ENCODE measurements at regions of chr5 and their contacts with region 1.

Region 1: DNA sequence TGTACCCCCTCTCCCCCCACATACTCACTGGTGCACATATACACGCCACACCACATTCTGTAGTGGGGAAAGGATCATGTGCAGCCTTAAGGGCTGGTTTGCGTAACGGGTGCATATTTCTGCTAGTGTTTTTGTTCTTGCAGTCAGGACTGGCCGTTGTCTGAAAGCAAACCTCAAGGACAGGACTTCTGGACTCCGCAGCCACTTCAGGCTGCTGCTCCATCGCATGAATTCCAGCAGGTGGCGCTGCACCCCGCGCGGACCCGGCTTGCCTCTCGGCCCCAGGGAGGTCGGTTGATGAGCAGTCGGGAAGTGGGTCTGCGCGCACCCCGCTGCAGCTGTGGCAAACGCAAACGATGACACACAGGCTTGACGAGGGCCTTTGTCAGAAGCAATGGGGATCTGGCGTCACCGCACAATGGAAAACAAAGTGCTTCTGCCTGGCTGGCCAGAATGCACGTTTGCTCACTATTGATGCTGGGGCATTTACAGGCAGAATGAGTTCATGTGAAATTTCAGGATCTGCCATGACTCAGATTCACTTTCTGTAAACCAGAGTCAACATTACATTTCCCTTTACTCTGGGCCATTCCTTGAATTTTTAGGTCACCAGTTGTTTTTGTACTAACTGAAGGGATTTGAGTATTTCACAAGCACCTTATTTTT is 36.3 kb upstream of the GLRX start:
- DNase-seq: peak; percentile 96
- H3K4me3 Mint-ChIP-seq: peak overlapping the region; percentile 67
- H3K27ac Mint-ChIP-seq: peak overlapping the region; percentile 99
- H3K4me1 Mint-ChIP-seq: peaks cover 57% of the 10 kb centered on the region
- H3K27me3 Mint-ChIP-seq: no peaks in the 10 kb centered on the region
- CTCF ChIP-seq: peak; percentile 93

Region 2: DNA sequence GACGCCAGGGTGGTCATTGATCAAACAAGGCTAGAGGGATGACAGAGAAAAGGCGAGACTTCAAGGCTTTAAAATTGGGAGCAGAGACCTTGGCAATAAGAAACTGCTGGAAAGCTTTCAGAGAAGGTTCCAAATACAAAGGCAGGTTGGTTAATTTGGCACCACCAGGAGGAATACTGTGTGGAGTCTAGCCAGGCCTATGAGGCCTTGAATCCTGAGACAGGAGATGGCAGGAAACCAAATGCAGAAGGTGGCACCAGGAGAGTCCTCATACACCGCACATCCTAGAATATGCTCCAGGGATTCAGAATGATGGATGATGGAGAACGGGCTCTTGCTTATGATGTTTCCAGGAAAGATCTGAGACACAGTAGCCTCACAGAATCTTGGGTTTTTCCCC is 663.9 kb before region 1 on chr5:
- CTCF ChIA-PET with region 1: no interaction called
- POLR2A ChIA-PET with region 1: no interaction called
- intact Hi-C with region 1: no loop called
- DNase-seq: no peak
- H3K4me3 Mint-ChIP-seq: no peak overlapping the region
- H3K27ac Mint-ChIP-seq: no peak overlapping the region
- H3K4me1 Mint-ChIP-seq: no peaks in the 10 kb centered on the region
- H3K27me3 Mint-ChIP-seq: no peaks in the 10 kb centered on the region
- CTCF ChIP-seq: no peak

Region 3: DNA sequence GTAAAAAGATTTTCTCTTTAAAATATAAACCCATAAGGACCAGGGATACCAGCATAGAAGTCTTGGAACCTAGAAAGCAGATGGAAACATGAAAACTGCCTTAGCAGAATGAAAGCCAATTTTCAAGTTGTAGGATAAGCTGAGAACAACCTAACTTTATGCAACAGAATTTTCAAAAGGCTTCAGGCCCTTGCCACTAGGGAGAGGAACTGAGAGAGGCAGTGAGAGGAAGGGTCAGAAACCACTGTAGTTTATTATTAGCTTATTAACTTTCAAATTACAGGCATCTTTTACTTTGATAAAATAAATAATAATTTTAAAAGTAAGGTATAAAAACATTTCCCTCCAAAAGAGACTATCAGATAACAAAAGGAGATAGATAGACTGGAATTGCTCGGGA is 434.3 kb before region 1 on chr5:
- CTCF ChIA-PET with region 1: no interaction called
- POLR2A ChIA-PET with region 1: no interaction called
- intact Hi-C with region 1: no loop called
- DNase-seq: no peak
- H3K4me3 Mint-ChIP-seq: no peak overlapping the region
- H3K27ac Mint-ChIP-seq: no peak overlapping the region
- H3K4me1 Mint-ChIP-seq: no peaks in the 10 kb centered on the region
- H3K27me3 Mint-ChIP-seq: no peaks in the 10 kb centered on the region
- CTCF ChIP-seq: no peak

Region 4: GRCh38 chr5:95870105-95870672 is 11.4 kb after region 1 on chr5:
- CTCF ChIA-PET with region 1: interaction called, 6 read pairs
- POLR2A ChIA-PET with region 1: interaction called, 11 read pairs
- intact Hi-C with region 1: no loop called
- DNase-seq: no peak
- H3K4me3 Mint-ChIP-seq: no peak overlapping the region
- H3K27ac Mint-ChIP-seq: peak overlapping the region; percentile 69
- H3K4me1 Mint-ChIP-seq: peaks cover 12% of the 10 kb centered on the region
- H3K27me3 Mint-ChIP-seq: no peaks in the 10 kb centered on the region
- CTCF ChIP-seq: no peak

Region 5: DNA sequence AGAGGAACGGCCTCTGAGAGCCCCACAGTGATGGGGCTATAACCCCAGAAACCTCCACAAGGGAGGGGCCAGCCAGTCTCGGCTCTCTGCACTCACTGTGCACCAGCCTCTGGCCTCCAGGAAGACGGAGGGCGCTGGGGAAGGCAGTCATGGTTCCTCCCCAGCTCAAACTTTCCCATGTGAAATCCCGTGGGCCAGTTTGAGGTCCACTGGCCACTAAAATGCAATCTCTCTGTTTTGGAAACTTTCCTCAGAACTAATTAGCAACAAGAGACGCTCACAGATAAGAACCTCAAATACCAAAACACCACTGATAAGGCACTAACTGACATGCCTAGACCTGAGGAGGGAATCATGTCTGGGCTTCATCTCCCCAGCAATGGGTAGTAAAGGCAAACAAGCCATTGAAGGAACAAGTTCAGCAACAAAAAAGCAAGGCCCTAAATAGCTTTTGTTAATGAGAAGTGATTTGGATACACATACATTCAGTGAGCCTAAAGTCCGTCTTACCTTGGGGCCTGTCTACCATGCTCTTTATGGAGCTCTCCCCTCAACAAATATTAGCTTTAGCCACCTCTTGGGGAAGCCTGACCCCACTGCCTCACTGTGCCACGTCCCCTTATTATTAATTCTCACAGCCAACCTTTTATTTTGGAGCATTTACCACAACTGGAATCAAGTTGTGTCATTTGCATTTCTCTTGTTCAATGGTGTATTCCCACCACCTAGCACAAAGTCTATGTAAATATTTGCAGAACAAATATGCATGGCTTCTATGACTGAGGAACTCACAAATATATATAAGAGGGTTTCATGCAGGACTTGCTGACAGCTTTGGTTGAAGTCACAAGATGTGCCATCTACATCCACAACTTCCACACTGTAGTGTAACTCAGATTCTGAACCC is 19.9 kb after region 1 on chr5:
- CTCF ChIA-PET with region 1: interaction called, 3 read pairs
- POLR2A ChIA-PET with region 1: interaction called, 12 read pairs
- intact Hi-C with region 1: no loop called
- DNase-seq: no peak
- H3K4me3 Mint-ChIP-seq: no peak overlapping the region
- H3K27ac Mint-ChIP-seq: peak overlapping the region; percentile 39
- H3K4me1 Mint-ChIP-seq: peaks cover 9% of the 10 kb centered on the region
- H3K27me3 Mint-ChIP-seq: no peaks in the 10 kb centered on the region
- CTCF ChIP-seq: no peak

Region 6: GRCh38 chr5:96093890-96094381 is 235.1 kb after region 1 on chr5:
- CTCF ChIA-PET with region 1: interaction called, 3 read pairs
- POLR2A ChIA-PET with region 1: interaction called, 4 read pairs
- intact Hi-C with region 1: loop called (anchors 1 kb)
- DNase-seq: peak; percentile 90
- H3K4me3 Mint-ChIP-seq: no peak overlapping the region
- H3K27ac Mint-ChIP-seq: peak overlapping the region; percentile 1
- H3K4me1 Mint-ChIP-seq: peaks cover 28% of the 10 kb centered on the region
- H3K27me3 Mint-ChIP-seq: no peaks in the 10 kb centered on the region
- CTCF ChIP-seq: no peak

Region 7: GRCh38 chr5:96151891-96152290 is 293.1 kb after region 1 on chr5:
- CTCF ChIA-PET with region 1: interaction called, 5 read pairs
- POLR2A ChIA-PET with region 1: interaction called, 12 read pairs
- intact Hi-C with region 1: no loop called
- DNase-seq: no peak
- H3K4me3 Mint-ChIP-seq: no peak overlapping the region
- H3K27ac Mint-ChIP-seq: no peak overlapping the region
- H3K4me1 Mint-ChIP-seq: peaks cover 28% of the 10 kb centered on the region
- H3K27me3 Mint-ChIP-seq: no peaks in the 10 kb centered on the region
- CTCF ChIP-seq: no peak